HAP-1 (cell line): ENCODE measurements at regions of chr1 and their contacts with region 1.

Region 1: GRCh38 chr1:33295450-33296081 is 25.3 kb downstream of the A3GALT2 start:
- DNase-seq: peak; percentile 47 to 91
- H3K4me3 ChIP-seq: no peak overlapping the region
- H3K4me1 ChIP-seq: no peaks in the 10 kb centered on the region
- H3K27me3 ChIP-seq: no peaks in the 10 kb centered on the region

Region 2: GRCh38 chr1:33466159-33466558 is 170.6 kb after region 1 on chr1:
- in situ Hi-C with region 1: loop called (anchors 5 kb)
- DNase-seq: no peak
- H3K4me3 ChIP-seq: no peak overlapping the region
- H3K4me1 ChIP-seq: peaks cover 4% of the 10 kb centered on the region; the same call in 1 of the 2 replicates
- H3K27me3 ChIP-seq: no peaks in the 10 kb centered on the region

Region 3: GRCh38 chr1:33616773-33617172 is 321.2 kb after region 1 on chr1:
- in situ Hi-C with region 1: loop called (anchors 10 kb)
- DNase-seq: peak in 1 of 2 experiments; percentile 22
- H3K4me3 ChIP-seq: no peak overlapping the region
- H3K4me1 ChIP-seq: no peaks in the 10 kb centered on the region
- H3K27me3 ChIP-seq: peaks cover 18% of the 10 kb centered on the region